AG04450 (cell line): ENCODE measurements at regions of chr22 and their contacts with region 1.

Region 1: GRCh38 chr22:17171313-17172171 is 12.5 kb upstream of the HDHD5 start:
- DNase-seq: peak; percentile 74
- H3K4me3 ChIP-seq: peak overlapping the region; percentile 72
- H3K27ac ChIP-seq: peak overlapping the region; percentile 81
- H3K27me3 ChIP-seq: no peaks in the 10 kb centered on the region
- CTCF ChIP-seq: peak; percentile 93

Region 2: DNA sequence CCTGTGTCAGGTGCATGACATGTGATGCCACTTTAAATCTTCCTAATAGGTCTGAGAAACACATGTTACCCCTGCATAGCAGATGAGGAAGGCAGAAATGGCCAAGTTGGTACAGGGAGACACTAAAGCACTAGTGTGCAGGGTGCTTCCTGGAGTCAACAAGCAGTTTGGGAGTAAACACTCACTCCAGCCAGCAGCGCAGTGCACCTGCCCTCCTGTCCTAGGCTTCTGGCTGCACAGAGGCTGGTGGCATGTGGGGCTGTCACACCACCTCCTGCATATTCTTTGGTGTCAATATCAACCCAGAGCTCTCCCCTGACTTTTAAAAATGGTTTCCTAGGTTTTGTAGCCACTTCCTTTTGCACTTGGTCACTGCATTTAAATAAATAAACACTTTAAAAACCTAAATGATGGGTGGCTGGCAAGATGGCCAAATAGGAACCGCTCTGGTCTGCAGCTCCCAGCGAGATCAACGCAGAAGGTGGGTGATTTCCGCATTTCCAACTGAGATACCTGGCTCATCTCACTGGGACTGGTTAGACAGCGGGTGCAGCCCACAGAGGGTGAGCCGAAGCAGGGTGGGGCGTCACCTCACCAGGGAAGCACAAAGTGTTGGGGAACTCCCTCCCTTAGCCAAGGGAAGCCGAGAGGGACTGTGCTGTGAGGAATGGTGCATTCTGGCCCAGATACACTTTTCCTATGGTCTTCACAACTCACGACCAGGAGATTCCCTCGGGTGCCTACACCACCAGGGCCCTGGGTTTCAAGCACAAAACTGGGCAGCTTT is 197.1 kb before region 1 on chr22:
- CTCF ChIA-PET with region 1: no interaction called
- POLR2A ChIA-PET with region 1: no interaction called
- DNase-seq: no peak
- H3K4me3 ChIP-seq: no peak overlapping the region
- H3K27ac ChIP-seq: no peak overlapping the region
- H3K27me3 ChIP-seq: no peaks in the 10 kb centered on the region
- CTCF ChIP-seq: no peak

Region 3: DNA sequence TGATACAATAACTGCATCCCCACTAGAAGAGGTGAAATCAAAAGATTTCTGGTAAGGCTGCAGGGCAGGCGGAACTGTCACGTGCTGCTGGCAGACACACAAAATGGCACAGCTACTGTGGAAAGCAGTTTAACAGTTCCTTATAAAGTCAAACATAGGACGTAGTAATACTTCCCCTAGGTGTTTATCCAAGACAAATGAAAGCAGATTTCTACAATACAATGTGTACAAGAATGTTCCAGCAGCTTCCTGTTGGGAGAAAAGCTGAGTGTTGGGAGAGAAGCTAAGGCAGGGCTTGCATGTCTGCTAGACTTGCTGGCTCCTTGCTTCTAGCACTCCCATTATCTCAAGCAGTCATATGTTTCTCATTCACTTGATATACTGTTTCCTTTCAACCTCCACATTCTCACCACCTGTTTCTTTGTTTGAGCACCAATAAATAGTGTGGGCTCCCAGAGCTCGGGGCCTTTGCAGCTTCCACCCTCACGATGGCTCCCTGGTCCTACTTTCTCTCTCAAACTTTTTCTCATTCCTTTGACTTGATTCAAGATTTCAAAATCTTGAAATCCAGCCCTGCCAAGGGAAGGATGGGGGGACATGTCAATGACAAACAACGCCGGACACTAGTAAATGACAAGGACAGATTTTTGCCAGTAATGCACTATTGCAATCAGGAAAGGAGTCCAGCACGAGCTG is 108.0 kb before region 1 on chr22:
- CTCF ChIA-PET with region 1: interaction called, 15 read pairs
- POLR2A ChIA-PET with region 1: interaction called, 3 read pairs
- DNase-seq: no peak
- H3K4me3 ChIP-seq: no peak overlapping the region
- H3K27ac ChIP-seq: no peak overlapping the region
- H3K27me3 ChIP-seq: peaks cover 13% of the 10 kb centered on the region
- CTCF ChIP-seq: no peak

Region 4: DNA sequence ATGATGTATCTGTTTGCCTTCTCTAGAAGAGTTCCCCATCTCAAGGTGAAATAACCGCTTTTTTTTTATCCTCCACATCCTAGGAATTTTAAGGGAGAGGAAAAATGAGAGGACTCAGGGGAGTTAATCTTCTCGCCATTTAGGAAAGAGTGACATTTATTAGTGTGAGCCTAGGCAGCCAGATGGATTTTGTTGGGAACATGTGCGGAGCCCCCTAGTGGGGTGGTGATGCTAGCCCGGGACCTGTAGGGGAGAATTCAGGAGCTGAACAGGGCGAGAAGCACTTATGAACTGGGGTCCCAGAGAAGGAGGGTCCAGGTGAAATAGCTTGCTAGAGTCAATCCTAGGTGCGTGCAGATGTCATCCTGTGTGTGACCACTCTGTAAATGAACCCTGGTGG is 76.0 kb before region 1 on chr22:
- CTCF ChIA-PET with region 1: interaction called, 16 read pairs
- POLR2A ChIA-PET with region 1: no interaction called
- DNase-seq: no peak
- H3K4me3 ChIP-seq: no peak overlapping the region
- H3K27ac ChIP-seq: no peak overlapping the region
- H3K27me3 ChIP-seq: no peaks in the 10 kb centered on the region
- CTCF ChIP-seq: peak; percentile 45

Region 5: GRCh38 chr22:17149076-17149810 is 22.3 kb before region 1 on chr22:
- CTCF ChIA-PET with region 1: interaction called, 75 read pairs
- POLR2A ChIA-PET with region 1: no interaction called
- DNase-seq: no peak
- H3K4me3 ChIP-seq: no peak overlapping the region
- H3K27ac ChIP-seq: no peak overlapping the region
- H3K27me3 ChIP-seq: no peaks in the 10 kb centered on the region
- CTCF ChIP-seq: no peak

Region 6: DNA sequence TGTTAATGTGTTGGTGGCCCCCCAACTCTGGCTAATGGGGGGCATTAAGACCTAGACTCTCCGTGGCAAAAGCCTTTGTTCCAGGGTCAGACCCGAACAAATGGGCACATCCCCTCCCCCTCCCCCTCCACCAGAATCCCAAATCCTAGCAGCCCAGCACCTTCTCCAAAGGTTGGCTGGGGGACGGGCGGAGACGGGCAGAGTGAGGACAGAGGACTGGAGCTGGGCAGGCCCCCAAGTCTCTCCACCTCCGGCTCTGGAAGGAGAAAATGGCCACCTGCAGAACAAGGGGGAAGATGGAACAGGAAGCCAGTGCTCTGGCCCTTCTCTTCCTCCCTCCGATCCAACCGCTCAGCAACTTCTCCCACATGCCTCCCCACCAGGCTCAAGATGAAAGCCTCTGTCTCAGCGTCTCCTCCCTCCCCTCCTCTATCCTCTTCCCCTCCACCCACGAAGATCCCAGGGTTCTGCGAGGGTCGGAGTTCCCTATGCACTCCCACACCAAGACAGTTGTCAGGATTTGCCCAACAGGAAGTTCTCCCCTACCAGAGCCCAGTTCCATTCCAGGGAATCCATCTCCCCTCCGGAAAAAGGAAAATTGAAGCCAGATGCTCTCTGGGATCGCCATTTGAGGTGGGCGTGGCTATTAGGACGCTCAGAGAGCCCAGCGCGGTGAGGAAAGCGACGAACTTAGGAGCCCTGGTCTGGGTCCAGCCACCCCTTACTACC is 27.6 kb after region 1 on chr22:
- CTCF ChIA-PET with region 1: interaction called, 100 read pairs
- POLR2A ChIA-PET with region 1: no interaction called
- DNase-seq: no peak
- H3K4me3 ChIP-seq: peak overlapping the region; percentile 31
- H3K27ac ChIP-seq: no peak overlapping the region
- H3K27me3 ChIP-seq: no peaks in the 10 kb centered on the region
- CTCF ChIP-seq: no peak

Region 7: GRCh38 chr22:17536269-17536668 is 364.7 kb after region 1 on chr22:
- CTCF ChIA-PET with region 1: interaction called, 10 read pairs
- POLR2A ChIA-PET with region 1: no interaction called
- DNase-seq: no peak
- H3K4me3 ChIP-seq: no peak overlapping the region
- H3K27ac ChIP-seq: no peak overlapping the region
- H3K27me3 ChIP-seq: peaks cover 2% of the 10 kb centered on the region
- CTCF ChIP-seq: no peak